Psoas muscle (tissue), 8 donors: ENCODE measurements at regions of chr10 and their contacts with region 1.

Region 1: GRCh38 chr10:59362144-59362958 is at the start of gene FAM13C:
- DNase-seq: peak; percentile 62 to 81
- ATAC-seq: peak; percentile 77 to 89 (median 88)
- H3K4me3 ChIP-seq: peak within 1 kb of the TSS; percentile 77
- H3K27ac ChIP-seq: peak within 1 kb of the TSS; percentile 90
- H3K4me1 ChIP-seq: peaks cover 16% of the 10 kb centered on the region
- H3K27me3 ChIP-seq: no peaks in the 10 kb centered on the region
- CTCF ChIP-seq: no peak
- total RNA-seq, gene FAM13C: 1.0 to 14.3 (median 13.3) TPM

Region 2: DNA sequence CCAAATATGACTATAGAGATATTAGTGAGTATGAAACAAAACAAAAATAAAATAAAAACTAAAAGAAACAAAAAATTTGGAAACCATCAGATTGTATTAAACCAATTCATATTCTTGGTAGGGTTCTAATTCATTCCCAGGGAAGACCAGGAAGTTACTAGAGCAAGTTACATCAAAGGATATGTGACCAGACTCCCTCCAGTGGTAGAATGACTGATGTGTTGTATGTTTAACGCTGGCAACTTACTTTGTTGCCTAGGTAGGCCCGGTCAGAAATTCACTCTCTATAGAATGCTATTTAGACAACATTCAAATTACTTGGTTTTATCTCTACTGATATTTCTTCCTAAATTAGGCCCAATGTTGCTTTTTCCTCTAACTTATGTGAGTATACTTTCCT is 180.7 kb before region 1 on chr10:
- intact Hi-C with region 1: no loop called
- DNase-seq: no peak
- ATAC-seq: peak in 3 of 4 donors; percentile 37 to 72 (median 42)
- H3K4me3 ChIP-seq: no peak overlapping the region
- H3K27ac ChIP-seq: no peak overlapping the region
- H3K4me1 ChIP-seq: no peaks in the 10 kb centered on the region
- H3K27me3 ChIP-seq: peaks cover 0 to 25% (median 2%) of the 10 kb centered on the region in 3 donors
- CTCF ChIP-seq: peak; percentile 54

Region 3: GRCh38 chr10:59265141-59265540 is 97.2 kb before region 1 on chr10:
- intact Hi-C with region 1: loop called in 1 of 2 experiments (anchors 5 kb)
- DNase-seq: no peak
- ATAC-seq: peak in 1 of 4 donors; percentile 50
- H3K4me3 ChIP-seq: no peak overlapping the region
- H3K27ac ChIP-seq: no peak overlapping the region
- H3K4me1 ChIP-seq: peaks cover 16% of the 10 kb centered on the region
- H3K27me3 ChIP-seq: no peaks in the 10 kb centered on the region
- CTCF ChIP-seq: no peak

Region 4: GRCh38 chr10:59323036-59323459 is 39.3 kb before region 1 on chr10:
- intact Hi-C with region 1: loop called (anchors 2 to 5 kb)
- DNase-seq: peak; percentile 53 to 73
- ATAC-seq: peak; percentile 92 to 96 (median 94)
- H3K4me3 ChIP-seq: no peak overlapping the region
- H3K27ac ChIP-seq: peak overlapping the region; percentile 84
- H3K4me1 ChIP-seq: peaks cover 51% of the 10 kb centered on the region
- H3K27me3 ChIP-seq: no peaks in the 10 kb centered on the region
- CTCF ChIP-seq: no peak